RWPE1 (cell line): ENCODE measurements at regions of chr12 and their contacts with region 1.

Region 1: GRCh38 chr12:76790564-76791552 is 26.9 kb downstream of the ZDHHC17 start:
- DNase-seq: peak; percentile 38
- H3K27ac ChIP-seq: no peak overlapping the region
- CTCF ChIP-seq: peak; percentile 64

Region 2: DNA sequence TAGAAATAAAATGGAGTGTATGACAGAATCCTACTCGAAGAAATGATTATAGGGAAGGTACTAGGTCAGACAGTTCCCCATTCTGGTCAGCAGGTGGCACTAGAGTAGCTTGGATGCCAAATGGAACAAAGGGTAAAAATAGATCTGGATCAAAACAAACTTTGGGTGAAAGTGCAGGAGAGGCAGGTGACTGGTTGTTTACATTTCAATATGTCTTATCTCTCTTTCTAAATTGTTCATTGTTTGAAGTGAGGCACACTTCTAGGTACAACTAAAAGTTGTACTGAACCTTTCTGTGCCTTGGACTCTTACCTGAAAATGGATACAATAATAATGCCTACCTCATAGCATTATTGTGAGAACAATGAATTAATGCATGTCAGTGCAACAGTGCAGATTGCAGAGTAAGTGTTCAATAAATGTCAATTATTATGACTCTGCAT is 169.3 kb before region 1 on chr12:
- CTCF ChIA-PET with region 1: interaction called, 12 read pairs
- POLR2A ChIA-PET with region 1: no interaction called
- DNase-seq: peak; percentile 60
- H3K27ac ChIP-seq: no peak overlapping the region
- CTCF ChIP-seq: peak; percentile 91

Region 3: GRCh38 chr12:77152623-77153193 is 361.9 kb after region 1 on chr12:
- CTCF ChIA-PET with region 1: no interaction called
- POLR2A ChIA-PET with region 1: no interaction called
- DNase-seq: peak; percentile 10
- H3K27ac ChIP-seq: no peak overlapping the region
- CTCF ChIP-seq: peak; percentile 33